ENCODE measurements at regions of chr1 and their contacts with region 1.

Region 1: DNA sequence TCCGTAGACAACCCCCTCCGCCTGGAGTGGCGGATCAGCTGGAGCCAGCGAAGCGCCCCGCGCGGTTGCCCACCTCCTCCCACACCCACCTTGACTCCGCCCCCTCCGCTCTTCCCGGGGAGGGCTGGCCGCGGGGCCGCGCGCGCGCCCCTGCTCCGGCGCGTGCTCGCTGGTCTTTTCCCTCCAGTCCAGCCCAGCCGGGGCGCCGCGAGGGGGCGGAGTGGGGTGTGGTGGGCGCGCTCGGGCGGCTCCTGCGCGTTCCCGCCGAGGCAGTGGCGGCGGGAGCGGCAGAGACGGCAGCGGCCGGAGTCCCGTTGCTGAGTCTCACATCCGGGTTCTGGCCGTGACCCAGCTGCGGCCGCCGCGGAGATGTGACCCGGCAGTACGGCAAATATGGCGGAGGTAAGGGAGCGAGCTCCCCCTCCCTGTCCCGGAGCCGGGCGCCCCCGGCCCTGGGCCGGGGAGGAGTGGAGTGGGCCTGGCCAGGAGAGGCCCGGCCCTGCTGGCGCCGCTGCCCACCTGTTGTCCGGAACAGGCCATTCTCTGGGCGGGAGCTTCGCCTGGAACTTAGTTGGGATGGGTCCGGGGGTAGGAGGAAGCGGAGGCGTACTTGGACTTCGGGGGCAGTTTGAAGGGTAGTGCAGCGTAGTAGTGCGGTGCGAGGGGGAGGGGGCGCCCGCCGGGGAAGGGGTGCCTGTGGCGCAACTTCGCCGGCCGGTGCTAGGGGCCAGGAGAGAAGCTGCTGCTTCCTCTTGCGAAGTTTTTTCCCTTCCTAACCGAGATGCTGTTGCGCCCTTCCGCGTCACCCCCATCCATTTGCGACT is 5.4 kb downstream of the MIER1 start:
- DNase-seq: peak; percentile 96
- H3K4me3 ChIP-seq: peak overlapping the region; percentile 98 to 99 (median 99)
- H3K27ac ChIP-seq: peak overlapping the region; percentile 84
- H3K4me1 ChIP-seq: peaks cover 52% of the 10 kb centered on the region
- H3K27me3 ChIP-seq: no peaks in the 10 kb centered on the region
- CTCF ChIP-seq: peak in 1 of 2 donors; percentile 13
- POLR2A ChIP-seq: no peak

Region 2: DNA sequence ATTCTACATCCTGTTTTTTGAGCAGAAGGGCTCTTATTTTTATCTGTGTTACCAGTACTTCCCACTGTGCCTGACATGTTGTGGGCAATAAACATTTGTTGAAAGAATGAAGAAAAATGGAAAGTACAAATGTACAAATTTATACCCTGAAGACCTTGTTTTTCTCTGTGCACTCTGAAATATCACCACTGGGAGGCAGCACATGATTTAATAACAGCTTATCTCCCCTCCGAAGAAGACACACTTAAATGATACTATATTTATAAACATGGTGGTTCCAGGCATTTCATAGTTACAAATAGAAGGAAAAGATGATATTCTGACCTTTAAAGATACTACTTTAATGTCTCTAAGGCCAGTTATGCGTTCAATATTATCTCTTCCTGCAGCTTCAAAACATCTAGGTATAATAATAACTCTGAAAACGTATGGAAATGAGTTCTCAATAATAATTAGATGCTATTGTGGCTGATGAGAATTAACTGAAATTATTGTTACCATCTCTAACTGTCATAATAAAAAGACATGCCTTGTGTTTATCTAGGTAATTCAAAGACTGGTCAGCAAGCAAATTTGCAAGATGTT is 165.1 kb before region 1 on chr1:
- CTCF ChIA-PET with region 1: interaction called, 9 read pairs
- POLR2A ChIA-PET with region 1: no interaction called
- dilution Hi-C with region 1: no loop called
- intact Hi-C with region 1: loop called (anchors 2 kb)
- DNase-seq: peak; percentile 79
- H3K4me3 ChIP-seq: no peak overlapping the region
- H3K27ac ChIP-seq: no peak overlapping the region
- H3K4me1 ChIP-seq: no peaks in the 10 kb centered on the region
- H3K27me3 ChIP-seq: no peaks in the 10 kb centered on the region
- CTCF ChIP-seq: peak; percentile 48 to 54
- POLR2A ChIP-seq: no peak

Region 3: DNA sequence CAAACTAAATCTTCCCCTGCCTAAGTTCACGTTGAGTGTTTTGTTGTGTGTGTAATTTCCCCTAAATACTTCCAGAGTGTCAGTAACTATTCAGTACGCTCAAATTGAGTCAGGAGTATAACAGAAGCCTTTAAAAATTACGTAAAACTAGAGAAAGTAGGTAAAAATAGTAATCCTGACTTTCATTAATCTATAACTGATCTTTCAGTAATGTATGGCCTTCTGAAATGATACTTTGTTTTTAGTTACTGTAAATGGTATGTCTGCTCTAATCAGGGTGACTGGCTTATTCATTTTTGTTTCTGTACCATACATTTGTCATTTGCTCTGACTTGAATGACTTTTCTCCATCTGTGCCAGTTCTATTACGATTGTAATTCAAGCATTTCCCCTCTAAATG is 24.0 kb after region 1 on chr1:
- CTCF ChIA-PET with region 1: interaction called, 4 read pairs
- POLR2A ChIA-PET with region 1: no interaction called
- dilution Hi-C with region 1: no loop called
- intact Hi-C with region 1: loop called (anchors 2 kb)
- DNase-seq: no peak
- H3K4me3 ChIP-seq: no peak overlapping the region
- H3K27ac ChIP-seq: peak overlapping the region; percentile 27
- H3K4me1 ChIP-seq: peaks cover 12% of the 10 kb centered on the region
- H3K27me3 ChIP-seq: no peaks in the 10 kb centered on the region
- CTCF ChIP-seq: no peak
- POLR2A ChIP-seq: no peak

Region 4: GRCh38 chr1:66981679-66982078 is 51.5 kb after region 1 on chr1:
- CTCF ChIA-PET with region 1: interaction called, 3 read pairs
- POLR2A ChIA-PET with region 1: no interaction called
- dilution Hi-C with region 1: no loop called
- intact Hi-C with region 1: loop called (anchors 2 kb)
- DNase-seq: no peak
- H3K4me3 ChIP-seq: no peak overlapping the region
- H3K27ac ChIP-seq: no peak overlapping the region
- H3K4me1 ChIP-seq: no peaks in the 10 kb centered on the region
- H3K27me3 ChIP-seq: no peaks in the 10 kb centered on the region
- CTCF ChIP-seq: no peak
- POLR2A ChIP-seq: no peak

Measured in endothelial cell of umbilical vein (primary cell).